ENCODE measurements at regions of chr15 and their contacts with region 1.

Region 1: GRCh38 chr15:67433495-67434099 is 87.3 kb upstream of the C15orf61 start:
- DNase-seq: peak; percentile 54 to 67 (median 62)
- ATAC-seq: peak; percentile 77
- H3K4me3 ChIP-seq: no peak overlapping the region
- H3K27ac ChIP-seq: no peak overlapping the region
- H3K4me1 ChIP-seq: no peaks in the 10 kb centered on the region
- H3K27me3 ChIP-seq: no peaks in the 10 kb centered on the region
- CTCF ChIP-seq: peak; percentile 39 to 77 (median 73)
- POLR2A ChIP-seq: no peak

Region 2: GRCh38 chr15:66946578-66947164 is 486.9 kb before region 1 on chr15:
- intact Hi-C with region 1: loop called (anchors 10 kb)
- DNase-seq: peak; percentile 71 to 79 (median 76)
- ATAC-seq: peak; percentile 76
- H3K4me3 ChIP-seq: no peak overlapping the region
- H3K27ac ChIP-seq: no peak overlapping the region
- H3K4me1 ChIP-seq: no peaks in the 10 kb centered on the region
- H3K27me3 ChIP-seq: no peaks in the 10 kb centered on the region
- CTCF ChIP-seq: peak; percentile 72 to 94 (median 92)
- POLR2A ChIP-seq: no peak